ENCODE measurements at regions of chr19 and their contacts with region 1.

Region 1: GRCh38 chr19:41597600-41598041 is 21.7 kb downstream of the CEACAM21 start:
- DNase-seq: peak; percentile 79
- H3K4me3 ChIP-seq: no peak overlapping the region
- H3K27ac ChIP-seq: no peak overlapping the region
- H3K4me1 ChIP-seq: no peaks in the 10 kb centered on the region
- H3K27me3 ChIP-seq: peaks cover 3% of the 10 kb centered on the region; the same call in 1 of the 2 replicates
- CTCF ChIP-seq: peak; percentile 95
- EP300 ChIP-seq: no peak
- RAD21 ChIP-seq: peak; percentile 36

Region 2: DNA sequence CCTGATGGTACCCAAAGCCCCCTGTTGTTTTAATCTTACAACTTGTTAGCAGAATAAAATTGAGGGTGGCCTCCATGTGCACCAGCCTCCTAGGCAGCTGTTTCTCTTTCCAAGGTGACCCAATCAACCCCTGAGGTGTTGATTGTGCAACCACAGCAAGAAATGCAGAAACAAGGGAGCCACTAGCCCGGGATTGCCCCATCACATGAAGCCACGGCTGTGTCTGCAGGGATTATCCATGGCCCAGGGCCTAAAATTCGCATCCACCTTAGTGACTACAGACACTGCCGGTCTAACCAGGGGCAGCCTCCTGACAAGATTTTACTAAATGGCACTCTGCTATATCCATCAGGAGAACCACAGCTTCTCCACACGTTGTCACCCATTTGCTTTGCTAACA is 14.9 kb after region 1 on chr19:
- CTCF ChIA-PET with region 1: interaction called, 15 read pairs
- POLR2A ChIA-PET with region 1: no interaction called
- DNase-seq: no peak
- H3K4me3 ChIP-seq: no peak overlapping the region
- H3K27ac ChIP-seq: no peak overlapping the region
- H3K4me1 ChIP-seq: no peaks in the 10 kb centered on the region
- H3K27me3 ChIP-seq: no peaks in the 10 kb centered on the region; the same call in 1 of the 2 replicates
- CTCF ChIP-seq: no peak
- EP300 ChIP-seq: no peak
- RAD21 ChIP-seq: no peak

Measured in SK-N-SH (cell line).